ENCODE measurements at regions of chr3 and their contacts with region 1.

Region 1: DNA sequence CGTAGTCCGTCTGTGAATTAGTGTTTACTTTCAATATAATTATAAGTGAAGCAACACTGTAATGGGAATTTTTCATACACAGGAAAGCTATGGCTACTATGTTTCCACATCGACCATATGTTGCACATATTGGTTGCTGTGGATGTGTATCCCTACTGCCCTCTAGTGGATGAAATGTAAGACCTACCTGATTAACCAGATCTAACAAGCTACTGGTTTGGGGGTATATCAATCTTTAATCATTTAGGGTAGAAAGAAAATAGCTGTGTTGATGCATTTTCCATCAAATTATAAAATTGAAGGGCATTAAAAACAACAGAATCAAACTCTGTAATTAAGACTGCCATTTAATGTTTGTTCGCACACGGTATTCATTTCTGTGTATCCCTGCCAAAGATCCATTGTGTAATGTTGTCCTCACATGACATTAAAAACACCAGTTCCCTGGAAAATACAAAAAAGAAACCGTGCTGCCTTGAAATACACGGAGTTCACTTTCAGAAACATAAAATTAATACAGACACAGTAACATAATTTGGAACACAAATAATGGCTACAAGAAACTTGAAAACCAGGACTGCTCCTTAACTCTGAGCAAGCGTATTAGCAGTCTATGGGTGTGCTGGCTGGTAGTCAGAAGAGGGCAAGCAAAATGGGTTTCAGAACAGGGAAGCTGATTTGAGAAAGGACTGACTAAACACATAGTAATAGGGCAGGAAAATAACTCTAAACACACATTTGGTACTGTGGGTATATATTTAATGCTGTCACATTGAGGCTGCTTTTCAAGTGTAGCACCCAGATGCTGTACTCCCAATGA is 125.1 kb downstream of the TIGIT start:
- DNase-seq: no peak
- ATAC-seq: peak; percentile 78 to 90
- H3K4me3 ChIP-seq: peak overlapping the region; percentile 12 to 48 (median 20)
- H3K27ac ChIP-seq: peak overlapping the region; percentile 53 to 79 (median 72)
- H3K4me1 ChIP-seq: peaks cover 83 to 93% of the 10 kb centered on the region in 2 donors
- H3K27me3 ChIP-seq: no peaks in the 10 kb centered on the region
- CTCF ChIP-seq: peak; percentile 85 to 97 (median 92)
- POLR2A ChIP-seq: no peak

Region 2: DNA sequence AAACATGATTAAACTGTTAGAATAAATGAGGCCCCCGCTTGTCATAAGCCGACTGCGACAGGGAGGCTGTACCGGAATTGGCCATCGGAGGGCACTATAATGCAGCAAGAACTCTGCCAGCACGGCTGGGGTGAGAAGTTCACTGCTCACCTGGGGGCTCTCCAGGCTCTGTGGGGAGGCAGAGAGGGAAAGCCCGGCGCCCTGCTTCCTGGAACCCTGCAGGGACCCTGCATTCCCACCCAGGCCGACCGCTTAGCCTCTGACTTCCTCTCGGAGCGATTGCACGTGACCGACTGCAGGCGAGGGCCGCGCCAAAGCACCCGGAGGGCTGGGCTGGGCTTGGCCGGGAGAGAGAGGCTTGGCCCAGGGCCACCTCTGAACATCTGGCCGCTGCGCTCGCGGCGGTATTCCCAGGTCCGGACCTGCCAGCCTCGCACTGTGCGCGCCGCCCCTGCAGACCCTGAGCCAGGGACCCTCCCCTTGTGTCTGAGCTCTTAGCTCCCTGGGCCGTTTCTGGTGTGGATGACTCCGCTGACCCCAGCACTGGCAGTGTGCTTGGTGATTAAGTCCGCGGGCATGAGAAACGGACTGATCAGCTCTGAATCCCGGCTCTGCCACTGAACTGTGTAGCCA is 266.3 kb before region 1 on chr3:
- in situ Hi-C with region 1: no loop called
- intact Hi-C with region 1: loop called (anchors 10 kb)
- DNase-seq: peak; percentile 22 to 46
- ATAC-seq: peak; percentile 80 to 82
- H3K4me3 ChIP-seq: peak overlapping the region; percentile 55 to 71 (median 66)
- H3K27ac ChIP-seq: no peak overlapping the region
- H3K4me1 ChIP-seq: peaks cover 0 to 6% of the 10 kb centered on the region in 2 donors
- H3K27me3 ChIP-seq: no peaks in the 10 kb centered on the region
- CTCF ChIP-seq: peak; percentile 58 to 88 (median 76)
- POLR2A ChIP-seq: no peak

Region 3: GRCh38 chr3:114400371-114400770 is 18.6 kb before region 1 on chr3:
- in situ Hi-C with region 1: no loop called
- intact Hi-C with region 1: loop called (anchors 2 kb)
- DNase-seq: no peak
- ATAC-seq: no peak
- H3K4me3 ChIP-seq: peak overlapping the region in 3 of 4 donors; percentile 18 to 27 (median 21)
- H3K27ac ChIP-seq: peak overlapping the region; percentile 73 to 80 (median 74)
- H3K4me1 ChIP-seq: peaks cover 61 to 71% of the 10 kb centered on the region in 2 donors
- H3K27me3 ChIP-seq: no peaks in the 10 kb centered on the region
- CTCF ChIP-seq: no peak
- POLR2A ChIP-seq: no peak

Measured in gastrocnemius medialis (tissue), 4 donors.